ENCODE measurements at regions of chr6 and their contacts with region 1.

Region 1: GRCh38 chr6:137637121-137637520 is 142.9 kb upstream of the OLIG3 start:
- DNase-seq: peak in 1 of 7 donors; percentile 20
- H3K4me3 ChIP-seq: no peak overlapping the region
- H3K27ac ChIP-seq: no peak overlapping the region
- H3K4me1 ChIP-seq: no peaks in the 10 kb centered on the region
- H3K27me3 ChIP-seq: peaks cover 3% of the 10 kb centered on the region
- CTCF ChIP-seq: no peak
- POLR2A ChIP-seq: no peak

Region 2: GRCh38 chr6:136967876-136968752 is 669.0 kb before region 1 on chr6:
- intact Hi-C with region 1: loop called in 1 of 2 experiments (anchors 5 kb)
- DNase-seq: peak; percentile 67 to 91 (median 78)
- H3K4me3 ChIP-seq: no peak overlapping the region
- H3K27ac ChIP-seq: peak overlapping the region in 1 of 5 donors; percentile 52
- H3K4me1 ChIP-seq: no peaks in the 10 kb centered on the region
- H3K27me3 ChIP-seq: no peaks in the 10 kb centered on the region
- CTCF ChIP-seq: peak; percentile 61 to 73 (median 68)
- POLR2A ChIP-seq: no peak

Region 3: GRCh38 chr6:137261393-137262160 is 375.5 kb before region 1 on chr6:
- intact Hi-C with region 1: loop called in 1 of 2 experiments (anchors 5 kb)
- DNase-seq: no peak
- H3K4me3 ChIP-seq: no peak overlapping the region
- H3K27ac ChIP-seq: no peak overlapping the region
- H3K4me1 ChIP-seq: peaks cover 0 to 6% of the 10 kb centered on the region in 2 donors
- H3K27me3 ChIP-seq: no peaks in the 10 kb centered on the region
- CTCF ChIP-seq: no peak
- POLR2A ChIP-seq: no peak

Region 4: GRCh38 chr6:137921823-137922222 is 284.7 kb after region 1 on chr6:
- intact Hi-C with region 1: no loop called
- DNase-seq: no peak
- H3K4me3 ChIP-seq: no peak overlapping the region
- H3K27ac ChIP-seq: no peak overlapping the region
- H3K4me1 ChIP-seq: peaks cover 0 to 1% of the 10 kb centered on the region in 2 donors
- H3K27me3 ChIP-seq: no peaks in the 10 kb centered on the region
- CTCF ChIP-seq: peak in 1 of 6 experiments; percentile 12
- POLR2A ChIP-seq: no peak